ENCODE measurements at regions of chr13 and their contacts with region 1.

Region 1: DNA sequence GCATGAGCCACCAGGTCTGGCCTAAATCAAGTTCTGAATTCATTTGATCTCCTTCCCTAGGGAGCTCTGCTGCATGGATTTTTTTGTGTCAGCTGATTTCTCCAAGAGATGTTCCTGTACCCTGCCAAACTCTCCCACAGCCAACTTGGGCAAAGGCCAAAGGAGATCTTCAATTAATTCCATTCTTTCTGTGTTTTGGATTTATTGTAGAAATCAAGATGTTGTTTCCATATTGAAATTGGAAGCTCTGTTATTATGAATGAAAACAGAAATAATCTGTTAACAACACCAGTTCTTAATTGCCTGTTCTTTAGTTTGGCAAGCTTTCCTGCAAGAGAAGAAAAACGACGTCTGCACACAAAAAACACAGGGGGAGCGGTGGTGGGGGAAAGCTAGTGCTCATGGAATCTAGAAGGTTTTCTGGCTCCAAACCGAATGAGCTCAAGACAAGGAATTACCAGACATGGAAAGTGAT is 86.5 kb upstream of the ABCC4 start:
- DNase-seq: no peak
- ATAC-seq: no peak
- H3K4me3 Mint-ChIP-seq: no peak overlapping the region
- H3K27ac Mint-ChIP-seq: no peak overlapping the region
- H3K4me1 Mint-ChIP-seq: peaks cover 32% of the 10 kb centered on the region
- H3K27me3 Mint-ChIP-seq: peaks cover 55% of the 10 kb centered on the region
- CTCF ChIP-seq: no peak

Region 2: GRCh38 chr13:95191821-95192563 is 195.8 kb before region 1 on chr13:
- CTCF ChIA-PET with region 1: interaction called, 183 read pairs
- POLR2A ChIA-PET with region 1: no interaction called
- intact Hi-C with region 1: no loop called
- DNase-seq: peak; percentile 67
- ATAC-seq: peak; percentile 97
- H3K4me3 Mint-ChIP-seq: no peak overlapping the region
- H3K27ac Mint-ChIP-seq: no peak overlapping the region
- H3K4me1 Mint-ChIP-seq: peaks cover 1% of the 10 kb centered on the region
- H3K27me3 Mint-ChIP-seq: no peaks in the 10 kb centered on the region
- CTCF ChIP-seq: no peak

Region 3: GRCh38 chr13:95284436-95284835 is 103.3 kb before region 1 on chr13:
- CTCF ChIA-PET with region 1: no interaction called
- POLR2A ChIA-PET with region 1: no interaction called
- intact Hi-C with region 1: loop called (anchors 5 kb)
- DNase-seq: no peak
- ATAC-seq: no peak
- H3K4me3 Mint-ChIP-seq: no peak overlapping the region
- H3K27ac Mint-ChIP-seq: no peak overlapping the region
- H3K4me1 Mint-ChIP-seq: peaks cover 45% of the 10 kb centered on the region
- H3K27me3 Mint-ChIP-seq: no peaks in the 10 kb centered on the region
- CTCF ChIP-seq: no peak

Measured in activated B cell treated with CpG ODN at 0.5 μM for 24 hours (primary cell).